ENCODE measurements at regions of chr2 and their contacts with region 1.

Region 1: GRCh38 chr2:96509114-96509846 is 4.1 kb upstream of the NEURL3 start:
- H3K4me3 Mint-ChIP-seq: no peak overlapping the region
- H3K27ac Mint-ChIP-seq: no peak overlapping the region
- H3K4me1 Mint-ChIP-seq: peaks cover 36% of the 10 kb centered on the region
- H3K27me3 Mint-ChIP-seq: peaks cover 27% of the 10 kb centered on the region

Region 2: GRCh38 chr2:96305091-96305978 is 203.9 kb before region 1 on chr2 and contains the start of gene SNRNP200:
- intact Hi-C with region 1: loop called (anchors 2 kb)
- H3K4me3 Mint-ChIP-seq: peak within 1 kb of the TSS; percentile 94
- H3K27ac Mint-ChIP-seq: peak within 1 kb of the TSS; percentile 96
- H3K4me1 Mint-ChIP-seq: peaks cover 75% of the 10 kb centered on the region
- H3K27me3 Mint-ChIP-seq: no peaks in the 10 kb centered on the region

Region 3: GRCh38 chr2:96359310-96359709 is 150.0 kb before region 1 on chr2:
- intact Hi-C with region 1: loop called (anchors 1 kb)
- H3K4me3 Mint-ChIP-seq: no peak overlapping the region
- H3K27ac Mint-ChIP-seq: peak overlapping the region; percentile 66
- H3K4me1 Mint-ChIP-seq: peaks cover 36% of the 10 kb centered on the region
- H3K27me3 Mint-ChIP-seq: no peaks in the 10 kb centered on the region

Region 4: DNA sequence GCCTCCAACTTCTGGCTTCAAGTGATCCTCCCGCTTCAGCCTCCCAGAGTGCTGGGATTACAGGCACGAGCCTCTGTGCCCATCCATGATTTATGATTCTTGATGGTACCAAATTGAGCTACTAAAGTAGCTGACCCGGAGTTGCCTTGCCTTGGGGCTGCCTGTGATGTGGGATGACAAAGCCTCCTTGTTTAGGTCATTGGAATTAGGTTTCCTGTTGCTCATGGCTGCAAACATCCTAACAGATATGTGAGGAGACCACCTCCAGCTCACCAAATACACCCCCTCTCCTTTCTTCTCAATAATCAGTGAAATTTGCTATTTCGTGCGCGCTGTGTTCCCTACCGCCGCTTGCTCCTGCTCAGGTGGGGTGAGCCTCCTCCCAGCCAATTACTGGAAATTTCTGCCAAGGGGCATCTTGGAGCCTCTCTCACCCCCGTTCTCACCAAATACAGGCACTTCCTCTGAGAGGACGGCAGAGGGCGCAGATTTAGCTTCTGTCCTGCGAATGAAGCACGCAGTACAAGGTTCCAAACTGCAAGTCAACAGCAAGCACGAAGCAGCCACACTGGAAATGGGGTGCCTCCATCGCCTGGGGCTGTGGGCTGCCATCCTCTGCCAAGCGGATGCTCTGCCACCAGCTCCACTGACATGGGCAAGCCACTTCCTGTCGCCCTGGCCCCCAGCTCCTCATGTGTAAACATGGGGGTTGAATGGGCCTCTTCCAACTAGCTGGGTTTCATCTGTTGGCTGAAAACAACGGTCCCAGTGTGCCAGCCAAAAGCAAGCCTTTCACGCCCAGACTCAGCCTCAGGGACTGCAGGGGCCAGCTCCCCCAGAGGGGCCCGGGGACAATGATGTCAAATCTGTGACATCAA is 102.0 kb before region 1 on chr2:
- intact Hi-C with region 1: loop called (anchors 1 kb)
- H3K4me3 Mint-ChIP-seq: no peak overlapping the region
- H3K27ac Mint-ChIP-seq: no peak overlapping the region
- H3K4me1 Mint-ChIP-seq: peaks cover 24% of the 10 kb centered on the region
- H3K27me3 Mint-ChIP-seq: peaks cover 12% of the 10 kb centered on the region

Region 5: GRCh38 chr2:96470636-96471035 is 38.6 kb before region 1 on chr2:
- intact Hi-C with region 1: loop called (anchors 1 kb)
- H3K4me3 Mint-ChIP-seq: peak overlapping the region; percentile 30
- H3K27ac Mint-ChIP-seq: peak overlapping the region; percentile 54
- H3K4me1 Mint-ChIP-seq: peaks cover 19% of the 10 kb centered on the region
- H3K27me3 Mint-ChIP-seq: peaks cover 19% of the 10 kb centered on the region

Region 6: GRCh38 chr2:96554293-96555145 is 45.2 kb after region 1 on chr2:
- intact Hi-C with region 1: loop called (anchors 1 kb)
- H3K4me3 Mint-ChIP-seq: no peak overlapping the region
- H3K27ac Mint-ChIP-seq: no peak overlapping the region
- H3K4me1 Mint-ChIP-seq: peaks cover 33% of the 10 kb centered on the region
- H3K27me3 Mint-ChIP-seq: peaks cover 3% of the 10 kb centered on the region

Measured in dendritic cell treated with granulocyte-macrophage colony-stimulating factor and Interleukin-4, amounts not matched to agents 40 ng/mL and 50 ng/mL, for 4 days (primary cell).